Right lobe of liver (tissue), 6 donors: ENCODE measurements at regions of chr7 and their contacts with region 1.

Region 1: GRCh38 chr7:26376175-26376917 is 84.7 kb downstream of the SNX10 start:
- DNase-seq: peak; percentile 51 to 77 (median 64)
- ATAC-seq: peak; percentile 54 to 78 (median 64)
- H3K4me3 ChIP-seq: peak overlapping the region; percentile 32 to 51 (median 37)
- H3K27ac ChIP-seq: peak overlapping the region in 2 of 3 donors; percentile 10 to 30
- H3K4me1 ChIP-seq: peaks cover 0 to 13% (median 0%) of the 10 kb centered on the region in 4 donors
- H3K27me3 ChIP-seq: no peaks in the 10 kb centered on the region
- CTCF ChIP-seq: no peak
- POLR2A ChIP-seq: no peak

Region 2: DNA sequence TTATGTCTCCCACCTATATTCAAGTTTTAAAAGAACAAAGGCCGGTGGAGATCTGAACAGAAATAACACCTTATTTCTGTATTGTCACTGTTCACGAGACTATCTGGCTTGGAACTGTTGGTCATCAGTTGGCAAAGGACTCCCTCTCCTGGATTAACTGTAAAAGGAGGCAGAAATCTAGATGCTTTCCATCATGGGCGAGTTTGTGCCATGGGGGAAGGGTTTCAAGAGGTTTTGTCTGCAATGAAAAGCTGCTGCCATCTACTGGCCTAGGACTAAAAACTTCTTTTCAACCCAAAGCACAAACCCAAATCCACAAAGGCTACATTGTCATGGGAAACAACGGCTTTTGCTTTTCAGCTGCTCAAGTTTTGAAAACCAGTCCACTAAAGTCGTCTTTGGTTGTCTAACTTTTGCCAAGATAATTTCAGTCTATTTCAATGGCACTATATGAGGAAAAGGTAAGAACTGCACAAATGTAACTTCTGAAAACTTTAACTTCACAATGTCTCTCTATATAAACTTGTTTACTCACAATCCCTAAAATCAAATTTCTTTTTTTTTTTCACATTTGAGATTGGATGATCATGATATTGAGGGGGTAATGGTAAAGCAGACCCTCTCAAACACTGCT is 291.3 kb after region 1 on chr7:
- intact Hi-C with region 1: loop called in 1 of 2 experiments (anchors 10 kb)
- DNase-seq: peak in 2 of 3 donors; percentile 46 to 84
- ATAC-seq: peak; percentile 97 to 98 (median 98)
- H3K4me3 ChIP-seq: no peak overlapping the region
- H3K27ac ChIP-seq: no peak overlapping the region
- H3K4me1 ChIP-seq: no peaks in the 10 kb centered on the region
- H3K27me3 ChIP-seq: no peaks in the 10 kb centered on the region
- CTCF ChIP-seq: peak; percentile 81 to 90 (median 82)
- POLR2A ChIP-seq: no peak

Region 3: GRCh38 chr7:27150568-27151340 is 774.4 kb after region 1 on chr7:
- intact Hi-C with region 1: loop called in 1 of 2 experiments (anchors 10 kb)
- DNase-seq: peak in 1 of 3 donors; percentile 74
- ATAC-seq: peak; percentile 80 to 92 (median 89)
- H3K4me3 ChIP-seq: peak overlapping the region in 2 of 3 donors; percentile 7 to 37
- H3K27ac ChIP-seq: no peak overlapping the region
- H3K4me1 ChIP-seq: peaks cover 0 to 7% (median 4%) of the 10 kb centered on the region in 4 donors
- H3K27me3 ChIP-seq: peaks cover 32 to 70% of the 10 kb centered on the region in 2 donors
- CTCF ChIP-seq: peak; percentile 64 to 86 (median 81)
- POLR2A ChIP-seq: no peak